ENCODE measurements at regions of chr2 and their contacts with region 1.

Region 1: DNA sequence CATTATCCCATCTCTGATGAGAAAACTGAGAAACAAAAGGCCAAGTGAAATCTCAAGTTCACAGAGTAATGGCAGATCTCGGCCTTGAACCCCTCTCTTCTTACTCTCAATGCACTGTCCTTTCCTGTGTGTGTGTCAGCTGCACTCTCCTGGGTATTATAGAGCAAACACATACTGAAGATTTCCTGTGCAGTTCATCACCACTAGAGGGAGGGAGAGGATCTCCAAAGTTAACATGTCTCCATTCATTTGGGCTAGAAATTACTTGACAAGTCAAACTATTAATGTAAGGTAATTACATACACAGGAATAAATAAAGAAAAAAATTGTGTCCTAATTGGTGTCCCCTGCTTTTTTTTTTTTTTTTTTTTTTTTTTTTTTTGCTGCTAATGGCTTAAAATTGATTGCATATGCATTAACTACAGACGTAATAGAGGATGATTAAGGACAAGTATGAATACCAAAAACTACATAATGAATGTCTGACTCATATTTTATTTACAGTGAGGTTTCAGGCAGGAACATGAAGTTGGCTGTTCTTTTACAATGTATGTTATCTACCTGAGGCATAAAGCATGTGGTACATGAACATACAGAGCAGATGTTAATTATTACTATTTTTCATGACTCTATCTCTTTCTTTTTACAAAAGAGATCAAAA is 269.2 kb downstream of the NYAP2 start:
- DNase-seq: no peak
- ATAC-seq: peak; percentile 82

Region 2: GRCh38 chr2:225615527-225615926 is 53.2 kb before region 1 on chr2:
- intact Hi-C with region 1: no loop called
- DNase-seq: no peak
- ATAC-seq: no peak

Region 3: DNA sequence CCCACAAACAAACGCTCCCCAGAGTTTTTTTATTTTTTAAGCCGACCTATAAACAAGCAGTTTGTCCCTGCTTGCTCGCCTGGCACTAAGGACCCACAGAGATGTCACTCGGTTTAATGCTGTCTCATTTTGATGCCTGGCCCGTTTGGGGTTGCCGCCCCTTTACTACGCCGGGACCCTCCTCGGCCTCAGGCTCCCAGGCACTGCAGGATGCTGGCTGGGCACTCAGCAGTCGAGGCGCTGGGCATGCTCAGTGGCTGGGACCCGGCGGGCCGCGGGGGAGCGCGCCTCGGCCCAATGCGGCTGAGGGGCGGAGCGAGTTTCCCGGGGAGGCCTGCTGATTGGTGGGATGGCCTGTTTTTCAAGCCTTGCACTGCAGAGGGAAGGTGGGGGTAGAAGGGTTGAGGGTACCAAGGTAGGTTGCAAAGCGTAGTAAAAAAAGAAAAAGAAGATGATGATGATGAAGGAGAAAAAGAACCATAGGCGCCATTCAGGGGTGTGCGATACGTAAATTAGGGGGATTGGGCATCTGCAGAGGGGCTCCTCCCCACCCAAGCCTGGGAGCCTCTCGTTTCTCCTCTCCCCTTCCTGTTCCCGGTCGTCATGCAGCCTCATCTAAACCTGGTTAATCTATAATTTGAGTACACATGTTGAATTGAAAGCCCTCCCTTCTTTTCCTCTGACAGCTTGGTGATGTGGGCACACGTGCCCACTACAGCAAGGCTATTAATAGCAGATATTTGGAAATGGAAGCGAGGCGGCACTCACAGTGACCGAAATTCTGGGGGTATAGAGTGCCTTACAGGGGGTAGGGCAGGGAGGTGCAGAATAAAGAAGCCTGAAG is 1132.4 kb after region 1 on chr2:
- intact Hi-C with region 1: loop called (anchors 5 kb)
- DNase-seq: peak; percentile 84
- ATAC-seq: peak; percentile 75

Measured in sciatic nerve (tissue), 2 donors.